ENCODE measurements at regions of chr1 and their contacts with region 1.

Region 1: GRCh38 chr1:100414693-100415497 is 62.6 kb downstream of the CDC14A start:
- DNase-seq: no peak
- ATAC-seq: peak; percentile 56
- H3K4me3 Mint-ChIP-seq: no peak overlapping the region
- H3K27ac Mint-ChIP-seq: peak overlapping the region; percentile 60
- H3K4me1 Mint-ChIP-seq: peaks cover 45% of the 10 kb centered on the region
- H3K27me3 Mint-ChIP-seq: no peaks in the 10 kb centered on the region

Region 2: GRCh38 chr1:100400404-100400803 is 14.5 kb before region 1 on chr1:
- CTCF ChIA-PET with region 1: interaction called, 15 read pairs
- POLR2A ChIA-PET with region 1: interaction called, 7 read pairs
- DNase-seq: peak; percentile 85
- ATAC-seq: peak; percentile 90
- H3K4me3 Mint-ChIP-seq: peak overlapping the region; percentile 58
- H3K27ac Mint-ChIP-seq: peak overlapping the region; percentile 91
- H3K4me1 Mint-ChIP-seq: peaks cover 85% of the 10 kb centered on the region
- H3K27me3 Mint-ChIP-seq: no peaks in the 10 kb centered on the region

Measured in activated CD8-positive, alpha-beta T cell treated with anti-CD3 and anti-CD28 coated beads, Interleukin-2, amount 10 ng/mL, durations not matched to agents 7 days and 5 days (primary cell).